ENCODE measurements at regions of chr15 and their contacts with region 1.

Region 1: GRCh38 chr15:38690689-38691332 is 126.2 kb upstream of the RASGRP1 start:
- DNase-seq: peak; percentile 60 to 87 (median 80)
- ATAC-seq: peak; percentile 68
- H3K4me3 ChIP-seq: no peak overlapping the region
- H3K4me3 Mint-ChIP-seq: peak overlapping the region in 7 of 10 donors; percentile 46 to 73 (median 69)
- H3K27ac ChIP-seq: peak overlapping the region; percentile 44
- H3K27ac Mint-ChIP-seq: peak overlapping the region; percentile 18 to 99 (median 95)
- H3K4me1 ChIP-seq: peaks cover 53 to 63% of the 10 kb centered on the region in 2 donors
- H3K4me1 Mint-ChIP-seq: peaks cover 49 to 87% (median 67%) of the 10 kb centered on the region in 7 donors
- H3K27me3 ChIP-seq: no peaks in the 10 kb centered on the region
- H3K27me3 Mint-ChIP-seq: no peaks in the 10 kb centered on the region

Region 2: DNA sequence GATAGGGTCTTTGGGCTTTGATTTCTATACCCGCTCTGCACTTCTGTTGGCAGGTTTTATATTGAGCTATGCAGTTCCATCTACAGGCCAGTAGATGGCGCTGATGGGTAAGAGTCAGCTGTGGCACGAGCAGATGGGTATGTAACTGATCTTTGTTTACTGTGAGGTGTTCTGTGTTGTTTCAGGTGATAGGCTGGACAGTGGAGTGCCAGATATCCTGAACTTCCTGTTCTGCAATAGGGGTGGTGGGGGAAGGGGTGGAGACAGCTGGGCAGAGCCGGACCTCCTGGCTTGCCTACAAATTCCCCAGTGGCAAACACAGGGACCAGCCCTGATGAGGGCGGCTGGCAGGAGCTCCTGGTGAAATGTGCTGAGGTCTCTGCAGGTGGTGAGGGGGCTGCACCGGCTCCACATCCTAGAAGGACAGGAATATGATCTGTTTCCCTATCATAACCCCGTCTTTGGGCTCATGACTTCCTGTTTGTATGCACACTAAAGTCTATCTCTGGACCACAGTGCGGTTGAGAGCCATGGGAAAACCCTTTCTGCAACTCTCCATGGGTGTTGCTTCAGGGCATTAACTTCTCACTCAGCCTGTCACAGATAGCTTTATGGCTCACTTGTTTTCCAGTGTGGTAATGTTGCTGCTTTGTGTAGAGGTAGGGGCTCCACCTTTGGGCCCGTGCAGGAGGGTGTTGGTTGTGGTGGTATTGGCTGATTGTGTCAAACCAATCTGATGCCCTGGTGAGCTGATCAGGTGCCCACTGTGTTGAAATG is 250.3 kb before region 1 on chr15:
- CTCF ChIA-PET with region 1: interaction called, 79 read pairs
- POLR2A ChIA-PET with region 1: interaction called, 3 read pairs
- intact Hi-C with region 1: loop called in 1 of 2 experiments (anchors 1 kb)
- DNase-seq: peak in 8 of 9 donors; percentile 33 to 72 (median 54)
- ATAC-seq: peak; percentile 99
- H3K4me3 ChIP-seq: no peak overlapping the region
- H3K4me3 Mint-ChIP-seq: peak overlapping the region in 1 of 10 donors; percentile 11
- H3K27ac ChIP-seq: no peak overlapping the region
- H3K27ac Mint-ChIP-seq: peak overlapping the region in 5 of 9 donors; percentile 5 to 21 (median 16)
- H3K4me1 ChIP-seq: no peaks in the 10 kb centered on the region
- H3K4me1 Mint-ChIP-seq: peaks cover 0 to 15% (median 6%) of the 10 kb centered on the region in 7 donors
- H3K27me3 ChIP-seq: no peaks in the 10 kb centered on the region
- H3K27me3 Mint-ChIP-seq: peaks cover 18 to 53% (median 33%) of the 10 kb centered on the region in 5 donors

Region 3: GRCh38 chr15:38474155-38474757 is 216.6 kb before region 1 on chr15:
- CTCF ChIA-PET with region 1: interaction called, 49 read pairs
- POLR2A ChIA-PET with region 1: interaction called, 16 read pairs
- intact Hi-C with region 1: loop called (anchors 1 kb)
- DNase-seq: peak in 7 of 9 donors; percentile 53 to 75 (median 62)
- ATAC-seq: peak; percentile 100
- H3K4me3 ChIP-seq: no peak overlapping the region
- H3K4me3 Mint-ChIP-seq: peak overlapping the region in 2 of 10 donors; percentile 4 to 10
- H3K27ac ChIP-seq: no peak overlapping the region
- H3K27ac Mint-ChIP-seq: peak overlapping the region; percentile 10 to 88 (median 81)
- H3K4me1 ChIP-seq: peaks cover 0 to 5% of the 10 kb centered on the region in 2 donors
- H3K4me1 Mint-ChIP-seq: peaks cover 10 to 23% (median 13%) of the 10 kb centered on the region in 7 donors
- H3K27me3 ChIP-seq: no peaks in the 10 kb centered on the region
- H3K27me3 Mint-ChIP-seq: no peaks in the 10 kb centered on the region

Region 4: GRCh38 chr15:38531509-38531908 is 159.3 kb before region 1 on chr15:
- CTCF ChIA-PET with region 1: interaction called, 18 read pairs
- POLR2A ChIA-PET with region 1: interaction called, 5 read pairs
- intact Hi-C with region 1: no loop called
- DNase-seq: no peak
- ATAC-seq: no peak
- H3K4me3 ChIP-seq: no peak overlapping the region
- H3K4me3 Mint-ChIP-seq: peak overlapping the region in 7 of 10 donors; percentile 1 to 58 (median 44)
- H3K27ac ChIP-seq: no peak overlapping the region
- H3K27ac Mint-ChIP-seq: peak overlapping the region in 8 of 9 donors; percentile 42 to 95 (median 78)
- H3K4me1 ChIP-seq: peaks cover 58 to 64% of the 10 kb centered on the region in 2 donors
- H3K4me1 Mint-ChIP-seq: peaks cover 67 to 99% (median 97%) of the 10 kb centered on the region in 7 donors
- H3K27me3 ChIP-seq: no peaks in the 10 kb centered on the region
- H3K27me3 Mint-ChIP-seq: no peaks in the 10 kb centered on the region

Region 5: DNA sequence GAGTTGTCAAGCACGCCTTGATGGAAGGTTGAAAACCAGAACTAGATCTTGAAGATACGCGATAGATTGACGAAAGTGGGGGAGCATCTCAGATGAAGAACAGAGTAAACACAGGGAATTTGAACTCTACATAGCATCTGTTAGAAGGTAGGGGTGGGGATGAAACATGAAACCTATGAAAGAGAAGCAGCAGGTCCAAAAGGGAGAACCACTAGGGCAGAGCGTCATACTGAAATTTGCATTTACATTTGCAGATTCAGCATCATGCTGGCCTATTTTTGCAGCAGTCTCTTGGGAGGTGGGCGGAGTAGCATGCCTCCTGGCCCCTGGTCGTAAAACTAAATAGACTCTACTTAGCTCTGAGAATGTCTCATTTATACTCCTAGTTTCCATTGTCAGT is 80.1 kb before region 1 on chr15:
- CTCF ChIA-PET with region 1: interaction called, 5 read pairs
- POLR2A ChIA-PET with region 1: no interaction called
- intact Hi-C with region 1: loop called in 1 of 2 experiments (anchors 1 kb)
- DNase-seq: peak in 8 of 9 donors; percentile 31 to 76 (median 54)
- ATAC-seq: peak; percentile 80
- H3K4me3 ChIP-seq: peak overlapping the region; percentile 2
- H3K4me3 Mint-ChIP-seq: peak overlapping the region; percentile 10 to 79 (median 40)
- H3K27ac ChIP-seq: peak overlapping the region; percentile 57
- H3K27ac Mint-ChIP-seq: peak overlapping the region; percentile 78 to 96 (median 88)
- H3K4me1 ChIP-seq: peaks cover 25 to 43% of the 10 kb centered on the region in 2 donors
- H3K4me1 Mint-ChIP-seq: peaks cover 28 to 75% (median 54%) of the 10 kb centered on the region in 7 donors
- H3K27me3 ChIP-seq: no peaks in the 10 kb centered on the region
- H3K27me3 Mint-ChIP-seq: no peaks in the 10 kb centered on the region

Region 6: GRCh38 chr15:38660738-38661137 is 30.1 kb before region 1 on chr15:
- CTCF ChIA-PET with region 1: interaction called, 4 read pairs
- POLR2A ChIA-PET with region 1: interaction called, 231 read pairs
- intact Hi-C with region 1: no loop called
- DNase-seq: peak in 2 of 9 donors; percentile 27 to 29
- ATAC-seq: peak; percentile 65
- H3K4me3 ChIP-seq: no peak overlapping the region
- H3K4me3 Mint-ChIP-seq: peak overlapping the region; percentile 5 to 84 (median 70)
- H3K27ac ChIP-seq: peak overlapping the region; percentile 56
- H3K27ac Mint-ChIP-seq: peak overlapping the region; percentile 56 to 94 (median 88)
- H3K4me1 ChIP-seq: peaks cover 17 to 53% of the 10 kb centered on the region in 2 donors
- H3K4me1 Mint-ChIP-seq: peaks cover 50 to 94% (median 83%) of the 10 kb centered on the region in 7 donors
- H3K27me3 ChIP-seq: no peaks in the 10 kb centered on the region
- H3K27me3 Mint-ChIP-seq: no peaks in the 10 kb centered on the region

Region 7: DNA sequence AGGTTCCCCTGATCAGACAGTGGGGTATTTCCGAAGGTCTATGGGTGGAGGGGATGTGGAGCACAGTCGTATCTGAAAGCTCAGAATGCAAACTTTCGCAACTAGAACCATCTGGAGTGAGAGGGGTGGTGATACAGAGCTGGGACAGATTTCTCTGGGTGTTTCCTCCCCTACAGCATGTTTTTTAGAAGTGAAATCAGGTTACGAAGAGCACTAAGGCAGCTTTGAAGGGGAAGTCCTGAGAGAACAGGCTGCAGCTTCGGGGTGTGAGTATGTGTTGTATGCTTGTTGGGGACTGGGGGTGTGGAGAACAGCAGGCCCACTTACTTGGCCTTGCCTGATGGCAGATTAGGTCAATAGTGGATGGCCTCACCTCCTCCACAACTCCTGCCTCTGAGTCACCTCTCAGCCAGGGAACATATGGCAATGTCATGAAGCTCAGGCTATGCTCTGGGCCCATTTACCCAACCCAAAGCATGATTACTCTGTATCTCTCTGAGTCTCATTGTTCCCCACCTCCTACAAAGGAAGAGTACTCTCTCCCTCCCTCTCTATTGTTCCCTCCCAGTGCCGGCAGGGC is 19.0 kb before region 1 on chr15:
- CTCF ChIA-PET with region 1: interaction called, 139 read pairs
- POLR2A ChIA-PET with region 1: interaction called, 91 read pairs
- intact Hi-C with region 1: no loop called
- DNase-seq: peak in 8 of 9 donors; percentile 55 to 84 (median 66)
- ATAC-seq: peak; percentile 79
- H3K4me3 ChIP-seq: peak overlapping the region; percentile 28
- H3K4me3 Mint-ChIP-seq: peak overlapping the region; percentile 27 to 86 (median 70)
- H3K27ac ChIP-seq: peak overlapping the region; percentile 90
- H3K27ac Mint-ChIP-seq: peak overlapping the region; percentile 93 to 100 (median 98)
- H3K4me1 ChIP-seq: peaks cover 73 to 74% of the 10 kb centered on the region in 2 donors
- H3K4me1 Mint-ChIP-seq: peaks cover 47 to 88% (median 80%) of the 10 kb centered on the region in 7 donors
- H3K27me3 ChIP-seq: no peaks in the 10 kb centered on the region
- H3K27me3 Mint-ChIP-seq: no peaks in the 10 kb centered on the region

Measured in naive thymus-derived CD4-positive, alpha-beta T cell (primary cell).